Colonic mucosa (tissue), 4 donors: ENCODE measurements at regions of chr11 and their contacts with region 1.

Region 1: DNA sequence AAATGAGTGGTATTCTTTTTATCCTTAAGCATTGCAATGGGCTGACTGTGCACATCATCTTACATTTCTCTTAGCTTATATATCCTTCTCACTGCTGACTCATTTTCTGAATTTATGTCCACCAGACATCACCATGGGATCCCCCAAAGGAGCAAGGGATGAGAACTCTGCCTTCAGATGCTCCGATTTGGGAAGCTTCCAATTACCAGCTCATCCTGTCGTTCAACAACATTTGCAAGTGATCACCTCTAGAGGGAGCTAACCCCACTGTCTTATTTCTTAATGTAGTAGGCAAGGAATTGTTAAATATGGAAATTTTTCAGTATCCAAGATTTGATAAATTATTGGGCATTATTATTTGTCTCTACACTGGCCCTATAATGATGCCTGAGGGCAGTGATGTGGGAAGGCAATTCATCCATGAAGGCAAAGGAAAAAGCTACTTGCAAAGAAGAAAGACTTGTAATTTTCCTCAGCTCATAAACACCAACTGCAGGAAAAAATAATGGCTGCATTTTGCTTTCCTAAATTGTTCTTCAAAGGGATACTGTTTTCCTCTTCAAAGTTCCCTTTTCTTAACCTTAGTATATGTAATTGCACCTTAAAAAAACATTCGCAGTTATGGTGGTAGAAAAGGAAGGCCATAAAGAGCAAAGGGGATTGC is 102.4 kb upstream of the FSHB start:
- DNase-seq: no peak
- H3K4me3 ChIP-seq: no peak overlapping the region
- H3K27ac ChIP-seq: no peak overlapping the region
- H3K4me1 ChIP-seq: no peaks in the 10 kb centered on the region
- H3K27me3 ChIP-seq: no peaks in the 10 kb centered on the region
- CTCF ChIP-seq: peak; percentile 41

Region 2: GRCh38 chr11:30196400-30197206 is 68.2 kb after region 1 on chr11:
- intact Hi-C with region 1: loop called (anchors 5 kb)
- DNase-seq: peak; percentile 57
- H3K4me3 ChIP-seq: no peak overlapping the region
- H3K27ac ChIP-seq: no peak overlapping the region
- H3K4me1 ChIP-seq: no peaks in the 10 kb centered on the region
- H3K27me3 ChIP-seq: no peaks in the 10 kb centered on the region
- CTCF ChIP-seq: peak; percentile 63